ENCODE measurements at regions of chr20 and their contacts with region 1.

Region 1: GRCh38 chr20:31845300-31845863 is at the start of gene FOXS1:
- DNase-seq: no peak
- H3K4me3 ChIP-seq: peak within 1 kb of the TSS; percentile 10 to 43 (median 30)
- H3K27ac ChIP-seq: peak within 1 kb of the TSS in 3 of 4 donors; percentile 7 to 60 (median 26)
- H3K4me1 ChIP-seq: peaks cover 17 to 25% (median 17%) of the 10 kb centered on the region in 4 donors
- H3K27me3 ChIP-seq: peaks cover 0 to 22% (median 3%) of the 10 kb centered on the region in 4 donors
- CTCF ChIP-seq: no peak
- EP300 ChIP-seq: no peak
- POLR2A ChIP-seq: no peak
- total RNA-seq, gene FOXS1: 0.50 to 3.4 (median 0.87) TPM

Region 2: DNA sequence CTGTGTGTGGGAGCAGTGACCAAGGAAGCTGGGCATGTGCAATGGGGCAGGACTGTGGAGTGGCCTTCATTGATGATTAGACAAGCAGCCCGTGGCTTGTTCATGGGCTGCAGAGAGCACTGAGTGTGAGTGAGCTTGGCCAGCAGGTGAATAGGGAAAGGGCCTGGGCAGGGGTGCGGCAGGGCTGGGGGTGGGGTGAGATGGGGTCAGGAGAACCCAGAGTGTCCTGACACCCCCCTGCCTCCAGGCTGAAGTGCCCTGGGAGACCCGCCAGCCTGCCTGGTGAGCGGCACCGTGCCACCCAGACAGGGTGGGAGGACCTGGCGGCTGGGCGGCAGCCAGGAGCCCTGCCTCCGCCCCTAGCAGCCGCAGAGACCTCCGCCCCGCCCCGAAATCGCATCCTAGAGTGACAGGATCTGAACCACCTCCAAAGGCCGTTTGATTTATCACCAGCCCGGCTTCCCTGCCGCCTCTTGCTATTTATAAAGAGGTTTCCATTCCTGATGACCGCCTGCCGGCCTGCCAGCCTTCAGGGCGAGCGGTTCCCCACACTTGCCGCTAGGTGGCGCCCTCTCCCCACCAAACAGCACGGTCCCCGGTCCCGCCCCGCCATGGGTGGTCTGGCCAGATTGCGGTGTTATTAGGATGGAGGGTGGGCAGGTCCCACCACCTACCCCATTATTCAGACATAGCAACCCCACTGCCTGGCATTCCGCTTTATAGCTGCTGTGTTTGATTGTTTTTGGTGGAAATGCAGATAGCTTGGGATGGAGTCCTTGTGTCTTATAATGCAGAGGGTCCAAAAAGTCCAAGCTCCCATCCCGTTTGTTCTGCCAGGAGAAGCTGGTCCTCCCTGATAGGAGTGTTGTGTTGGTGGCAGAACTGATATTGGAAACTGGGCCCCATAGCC is 22.7 kb before region 1 on chr20:
- intact Hi-C with region 1: loop called (anchors 2 kb)
- DNase-seq: no peak
- H3K4me3 ChIP-seq: peak overlapping the region in 3 of 4 donors; percentile 2 to 17 (median 15)
- H3K27ac ChIP-seq: no peak overlapping the region
- H3K4me1 ChIP-seq: peaks cover 4 to 15% (median 12%) of the 10 kb centered on the region in 4 donors
- H3K27me3 ChIP-seq: no peaks in the 10 kb centered on the region
- CTCF ChIP-seq: peak; percentile 97 to 100 (median 99)
- EP300 ChIP-seq: no peak
- POLR2A ChIP-seq: no peak